ENCODE measurements at regions of chr3 and their contacts with region 1.

Region 1: GRCh38 chr3:42749753-42750231 is 23.3 kb downstream of the CCDC13 start:
- DNase-seq: no peak
- H3K4me3 ChIP-seq: no peak overlapping the region
- H3K27ac ChIP-seq: no peak overlapping the region
- H3K4me1 ChIP-seq: peaks cover 0 to 11% (median 4%) of the 10 kb centered on the region in 4 experiments; a peak in 5 of 7 replicates
- H3K27me3 ChIP-seq: no peaks in the 10 kb centered on the region; a peak in 2 of 7 replicates
- CTCF ChIP-seq: peak; percentile 52 to 75 (median 64)
- EP300 ChIP-seq: no peak
- POLR2A ChIP-seq: no peak
- RAD21 ChIP-seq: peak; percentile 65 to 73

Region 2: GRCh38 chr3:41338276-41338675 is 1411.5 kb before region 1 on chr3:
- CTCF ChIA-PET with region 1: no interaction called
- POLR2A ChIA-PET with region 1: no interaction called
- DNase-seq: no peak
- H3K4me3 ChIP-seq: no peak overlapping the region
- H3K27ac ChIP-seq: no peak overlapping the region
- H3K4me1 ChIP-seq: no peaks in the 10 kb centered on the region; a peak in 1 of 7 replicates
- H3K27me3 ChIP-seq: no peaks in the 10 kb centered on the region
- CTCF ChIP-seq: no peak
- EP300 ChIP-seq: no peak
- POLR2A ChIP-seq: no peak
- RAD21 ChIP-seq: no peak

Region 3: GRCh38 chr3:42581709-42582473 is 167.9 kb before region 1 on chr3 and contains the start of gene SEC22C:
- CTCF ChIA-PET with region 1: interaction called, 11 read pairs
- POLR2A ChIA-PET with region 1: interaction called, 3 read pairs
- DNase-seq: peak; percentile 88 to 96
- H3K4me3 ChIP-seq: peak within 1 kb of the TSS; percentile 70 to 94 (median 86)
- H3K27ac ChIP-seq: peak within 1 kb of the TSS; percentile 77
- H3K4me1 ChIP-seq: peaks cover 2 to 14% (median 5%) of the 10 kb centered on the region in 4 experiments; a peak in 6 of 7 replicates
- H3K27me3 ChIP-seq: no peaks in the 10 kb centered on the region
- CTCF ChIP-seq: peak; percentile 28 to 47 (median 40); a peak in 3 of 4 replicates
- EP300 ChIP-seq: 0 out of 3 replicates have a peak, but pooled peaks of 1 of the 2 experiments have one; percentile 1
- POLR2A ChIP-seq: peak; percentile 81 to 85
- RAD21 ChIP-seq: peak; percentile 60; a peak in 3 of 4 replicates
- total RNA-seq, gene SEC22C: 38.3 and 38.5 TPM in 2 replicates

Region 4: GRCh38 chr3:42660893-42661292 is 88.9 kb before region 1 on chr3:
- CTCF ChIA-PET with region 1: interaction called, 54 read pairs
- POLR2A ChIA-PET with region 1: interaction called, 3 read pairs
- DNase-seq: peak in 1 of 2 experiments; percentile 47
- H3K4me3 ChIP-seq: no peak overlapping the region
- H3K27ac ChIP-seq: no peak overlapping the region
- H3K4me1 ChIP-seq: no peaks in the 10 kb centered on the region
- H3K27me3 ChIP-seq: no peaks in the 10 kb centered on the region
- CTCF ChIP-seq: peak in 2 of 3 experiments; percentile 56 to 66; a peak in 3 of 4 replicates
- EP300 ChIP-seq: no peak
- POLR2A ChIP-seq: no peak
- RAD21 ChIP-seq: peak; percentile 37 to 59

Region 5: GRCh38 chr3:42701142-42702065 is 48.4 kb before region 1 on chr3:
- CTCF ChIA-PET with region 1: interaction called, 53 read pairs
- POLR2A ChIA-PET with region 1: no interaction called
- DNase-seq: peak; percentile 31 to 92
- H3K4me3 ChIP-seq: no peak overlapping the region
- H3K27ac ChIP-seq: no peak overlapping the region
- H3K4me1 ChIP-seq: peaks cover 0 to 12% (median 0%) of the 10 kb centered on the region in 4 experiments; a peak in 3 of 7 replicates
- H3K27me3 ChIP-seq: no peaks in the 10 kb centered on the region
- CTCF ChIP-seq: no peak
- EP300 ChIP-seq: no peak
- POLR2A ChIP-seq: no peak
- RAD21 ChIP-seq: peak in 1 of 2 experiments; percentile 2; a peak in 1 of 4 replicates

Region 6: GRCh38 chr3:42721690-42722089 is 28.1 kb before region 1 on chr3:
- CTCF ChIA-PET with region 1: interaction called, 53 read pairs
- POLR2A ChIA-PET with region 1: no interaction called
- DNase-seq: no peak
- H3K4me3 ChIP-seq: no peak overlapping the region
- H3K27ac ChIP-seq: no peak overlapping the region
- H3K4me1 ChIP-seq: no peaks in the 10 kb centered on the region
- H3K27me3 ChIP-seq: no peaks in the 10 kb centered on the region
- CTCF ChIP-seq: no peak
- EP300 ChIP-seq: no peak
- POLR2A ChIP-seq: no peak
- RAD21 ChIP-seq: no peak

Region 7: DNA sequence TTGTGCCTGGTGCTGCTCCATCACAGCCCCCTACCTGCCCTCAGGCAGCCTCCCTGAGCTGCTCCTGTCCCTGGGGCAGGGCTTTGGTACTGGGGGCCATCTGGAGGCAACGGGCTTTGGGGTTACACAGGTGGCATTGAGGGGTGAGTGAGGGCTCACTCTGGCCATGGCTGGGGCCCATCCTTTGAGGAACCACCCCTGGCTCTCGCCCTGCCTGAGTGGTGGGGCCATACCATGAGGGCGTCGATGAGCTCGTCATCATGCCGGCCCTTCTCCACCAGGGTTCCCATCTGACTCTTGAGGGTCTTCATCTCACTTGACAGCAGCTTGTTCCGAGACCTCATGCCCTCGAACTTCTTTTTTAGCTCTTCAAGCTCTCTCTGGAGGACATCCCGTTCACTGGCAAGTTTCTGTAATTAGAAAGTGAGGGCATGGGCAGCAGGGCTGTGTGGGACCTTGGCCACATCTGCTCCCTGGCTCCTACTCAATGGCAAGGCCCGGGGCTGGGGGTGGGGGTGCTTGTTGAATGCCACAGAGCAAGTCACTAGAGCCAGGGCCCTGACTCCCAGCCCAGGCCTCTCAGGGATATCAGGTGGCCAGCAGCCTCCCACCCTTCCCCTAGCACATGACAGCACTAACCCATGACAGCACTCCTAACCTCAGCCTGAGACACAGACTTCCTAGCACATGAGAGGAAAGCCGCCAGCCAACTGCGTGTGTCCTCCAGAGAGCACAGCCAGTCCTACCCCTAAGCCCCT is 10.2 kb before region 1 on chr3:
- CTCF ChIA-PET with region 1: interaction called, 47 read pairs
- POLR2A ChIA-PET with region 1: no interaction called
- DNase-seq: peak in 1 of 2 experiments; percentile 41
- H3K4me3 ChIP-seq: no peak overlapping the region
- H3K27ac ChIP-seq: no peak overlapping the region
- H3K4me1 ChIP-seq: peaks cover 0 to 12% (median 6%) of the 10 kb centered on the region in 4 experiments; a peak in 4 of 7 replicates
- H3K27me3 ChIP-seq: 0 out of 7 replicates have a peak, but pooled peaks cover 0 to 3% (median 0%) of the 10 kb centered on the region in 4 experiments
- CTCF ChIP-seq: no peak
- EP300 ChIP-seq: no peak
- POLR2A ChIP-seq: no peak
- RAD21 ChIP-seq: no peak

Region 8: DNA sequence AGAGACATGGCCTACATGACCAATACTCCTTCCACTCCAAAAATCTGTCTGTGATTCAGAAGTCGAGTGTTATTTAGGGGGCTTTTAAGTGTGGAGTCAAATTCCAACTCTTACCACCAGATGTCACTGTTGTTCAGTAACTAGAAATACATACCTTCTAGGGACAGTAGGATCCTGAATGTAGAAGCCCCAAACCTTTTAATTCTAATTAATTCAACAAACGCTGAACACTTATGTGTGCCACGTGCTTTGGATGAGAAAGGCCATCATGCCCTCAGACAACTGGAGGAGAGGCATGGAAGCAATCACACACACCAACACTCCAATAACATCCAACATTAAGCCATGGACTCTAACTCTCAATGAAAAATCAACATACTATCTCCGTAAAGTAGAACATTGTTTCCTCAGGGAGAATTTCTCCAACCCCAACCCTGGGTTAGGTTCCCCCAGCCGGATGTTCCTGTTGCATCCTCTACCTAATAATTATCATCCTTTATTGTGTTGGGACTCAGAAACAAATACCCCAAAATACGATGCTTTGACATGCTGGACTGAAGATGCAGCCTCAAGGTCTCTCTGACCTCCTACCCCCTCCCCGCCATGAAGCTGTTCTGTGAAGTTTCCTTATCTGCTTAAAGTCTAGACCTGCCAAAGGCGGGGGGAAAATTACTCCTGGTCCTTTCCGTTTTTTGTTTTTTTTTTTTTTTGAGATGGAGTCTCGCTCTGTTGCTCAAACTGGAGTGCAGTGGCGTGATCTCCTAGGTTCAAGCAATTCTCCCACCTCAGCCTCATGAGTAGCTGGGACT is 31.3 kb after region 1 on chr3:
- CTCF ChIA-PET with region 1: interaction called, 10 read pairs
- POLR2A ChIA-PET with region 1: no interaction called
- DNase-seq: no peak
- H3K4me3 ChIP-seq: no peak overlapping the region
- H3K27ac ChIP-seq: no peak overlapping the region
- H3K4me1 ChIP-seq: peaks cover 0 to 3% (median 0%) of the 10 kb centered on the region in 4 experiments; a peak in 2 of 7 replicates
- H3K27me3 ChIP-seq: no peaks in the 10 kb centered on the region
- CTCF ChIP-seq: peak in 2 of 3 experiments; percentile 54 to 67; a peak in 2 of 4 replicates
- EP300 ChIP-seq: no peak
- POLR2A ChIP-seq: no peak
- RAD21 ChIP-seq: peak; percentile 75 to 77

Region 9: DNA sequence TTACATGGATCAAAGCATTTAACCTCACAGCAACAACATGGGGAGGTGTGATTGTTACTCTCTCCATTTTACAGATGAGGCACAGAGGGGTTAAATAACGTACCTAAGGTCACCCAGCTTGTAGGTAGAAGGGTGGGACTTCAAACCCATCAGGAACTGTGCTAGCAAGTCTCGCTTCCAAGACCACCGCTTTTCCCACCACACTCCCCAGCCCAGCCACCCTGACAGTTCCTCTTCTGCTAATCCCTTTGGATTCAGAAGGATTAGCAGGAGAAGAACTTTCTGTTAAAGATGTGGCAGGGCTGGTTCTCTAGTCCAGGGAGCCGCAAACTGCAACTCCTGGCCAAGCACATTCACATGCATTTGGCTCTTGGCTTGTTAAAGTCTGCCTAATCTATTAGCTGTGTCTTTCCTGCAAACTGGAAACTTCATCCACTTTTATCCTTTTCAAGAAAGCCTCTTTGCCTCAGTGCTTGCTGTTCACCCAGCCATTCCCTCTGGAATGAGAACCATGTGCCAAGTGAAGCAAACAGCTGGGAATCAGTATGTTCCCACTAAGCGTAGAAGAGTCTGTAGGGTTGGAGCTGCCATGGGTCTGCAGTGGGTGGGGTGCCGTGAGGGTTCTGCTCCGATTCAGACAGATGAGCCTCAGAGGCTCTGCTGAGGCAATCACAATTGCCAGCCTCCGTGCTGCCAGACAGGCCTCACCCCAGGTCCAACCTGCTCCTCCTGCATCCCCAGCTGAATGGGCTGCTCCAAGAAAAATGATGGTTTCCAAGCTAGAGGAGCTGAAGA is 311.5 kb after region 1 on chr3:
- CTCF ChIA-PET with region 1: no interaction called
- POLR2A ChIA-PET with region 1: no interaction called
- DNase-seq: no peak
- H3K4me3 ChIP-seq: no peak overlapping the region
- H3K27ac ChIP-seq: no peak overlapping the region
- H3K4me1 ChIP-seq: peaks cover 0 to 3% (median 0%) of the 10 kb centered on the region in 4 experiments; a peak in 1 of 7 replicates
- H3K27me3 ChIP-seq: no peaks in the 10 kb centered on the region
- CTCF ChIP-seq: no peak
- EP300 ChIP-seq: no peak
- POLR2A ChIP-seq: no peak
- RAD21 ChIP-seq: no peak